ENCODE measurements at regions of chr3 and their contacts with region 1.

Region 1: DNA sequence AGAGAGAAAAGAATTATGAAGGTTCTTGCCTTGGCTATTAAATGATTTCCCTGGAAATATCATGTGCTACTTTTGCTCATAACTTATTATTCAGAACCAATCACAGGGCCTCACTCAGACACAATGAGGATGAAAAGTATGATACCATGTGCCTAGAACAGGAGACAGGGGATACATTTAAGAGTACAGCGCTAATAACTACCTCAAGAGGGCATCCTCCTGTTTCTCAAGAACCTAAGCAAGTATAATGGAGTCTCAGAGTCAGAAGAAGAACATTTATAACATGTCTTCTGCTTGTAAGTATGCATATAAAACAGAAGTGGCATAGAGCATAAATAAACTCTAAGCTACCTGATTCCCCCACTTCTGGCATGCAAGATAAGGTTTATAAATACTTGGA is 125.4 kb upstream of the MME start:
- DNase-seq: no peak
- ATAC-seq: no peak
- H3K4me3 Mint-ChIP-seq: no peak overlapping the region
- H3K27ac Mint-ChIP-seq: no peak overlapping the region
- H3K4me1 Mint-ChIP-seq: no peaks in the 10 kb centered on the region
- H3K27me3 Mint-ChIP-seq: no peaks in the 10 kb centered on the region
- CTCF ChIP-seq: no peak

Region 2: DNA sequence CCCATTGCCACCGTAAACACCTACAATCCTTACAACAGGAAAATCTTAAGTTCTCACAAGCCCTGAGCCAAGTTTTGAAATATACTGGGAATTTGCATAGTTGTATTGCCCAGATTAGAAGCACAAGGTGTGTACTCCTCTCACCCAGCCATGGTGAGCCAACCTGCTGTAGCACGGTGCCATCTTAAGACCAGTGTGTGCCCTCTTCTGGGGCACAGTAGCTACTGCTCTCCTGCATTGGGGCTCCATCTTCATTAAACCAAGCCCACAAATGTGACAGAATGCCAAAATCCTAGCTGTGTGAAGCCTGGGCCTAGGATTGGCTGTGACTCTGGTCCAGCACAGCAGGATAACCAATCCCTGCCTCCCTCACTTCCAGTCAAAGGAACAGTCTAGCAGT is 15.4 kb before region 1 on chr3:
- CTCF ChIA-PET with region 1: no interaction called
- POLR2A ChIA-PET with region 1: no interaction called
- intact Hi-C with region 1: no loop called
- DNase-seq: no peak
- ATAC-seq: no peak
- H3K4me3 Mint-ChIP-seq: no peak overlapping the region
- H3K27ac Mint-ChIP-seq: no peak overlapping the region
- H3K4me1 Mint-ChIP-seq: no peaks in the 10 kb centered on the region
- H3K27me3 Mint-ChIP-seq: no peaks in the 10 kb centered on the region
- CTCF ChIP-seq: no peak

Region 3: DNA sequence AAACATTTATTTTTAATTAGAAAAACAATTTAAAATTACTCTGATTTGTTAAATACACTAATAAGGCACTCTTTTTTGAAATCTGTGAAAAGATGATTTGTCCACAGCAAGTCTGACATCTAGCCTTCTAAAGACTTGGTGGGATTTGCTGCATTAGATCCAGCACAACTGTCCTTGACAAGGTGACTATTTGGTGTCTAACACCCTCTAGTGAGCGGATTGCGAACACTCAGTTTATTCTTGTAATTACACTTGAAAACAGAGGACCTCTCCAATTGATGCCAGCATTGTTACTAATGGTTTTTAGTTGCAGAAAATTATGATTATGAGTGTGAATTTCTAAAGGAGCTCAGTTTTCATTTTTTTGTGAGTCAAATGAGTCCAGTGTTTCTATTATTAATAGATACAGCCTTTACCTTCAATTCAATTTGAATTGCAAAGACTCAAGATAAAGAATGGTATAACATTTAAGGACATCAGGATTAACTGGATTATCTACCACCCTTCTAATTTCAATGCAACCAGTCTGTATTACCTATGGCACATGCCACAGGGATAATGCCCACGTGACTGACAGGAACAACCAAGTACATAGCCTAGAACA is 368.4 kb after region 1 on chr3:
- CTCF ChIA-PET with region 1: no interaction called
- POLR2A ChIA-PET with region 1: no interaction called
- intact Hi-C with region 1: loop called (anchors 10 kb)
- DNase-seq: peak; percentile 34
- ATAC-seq: peak; percentile 66
- H3K4me3 Mint-ChIP-seq: no peak overlapping the region
- H3K27ac Mint-ChIP-seq: no peak overlapping the region
- H3K4me1 Mint-ChIP-seq: no peaks in the 10 kb centered on the region
- H3K27me3 Mint-ChIP-seq: no peaks in the 10 kb centered on the region
- CTCF ChIP-seq: peak; percentile 51